ENCODE measurements at regions of chr1 and their contacts with region 1.

Region 1: GRCh38 chr1:152189657-152190442 is 30.8 kb upstream of the RPTN start:
- DNase-seq: peak; percentile 77
- H3K4me3 Mint-ChIP-seq: peak overlapping the region; percentile 71
- H3K27ac Mint-ChIP-seq: no peak overlapping the region
- H3K4me1 Mint-ChIP-seq: peaks cover 27% of the 10 kb centered on the region
- H3K27me3 Mint-ChIP-seq: peaks cover 61% of the 10 kb centered on the region
- CTCF ChIP-seq: peak; percentile 71

Region 2: GRCh38 chr1:151888972-151889570 is 300.8 kb before region 1 on chr1:
- CTCF ChIA-PET with region 1: no interaction called
- intact Hi-C with region 1: loop called (anchors 1 kb)
- DNase-seq: no peak
- H3K4me3 Mint-ChIP-seq: no peak overlapping the region
- H3K27ac Mint-ChIP-seq: no peak overlapping the region
- H3K4me1 Mint-ChIP-seq: no peaks in the 10 kb centered on the region
- H3K27me3 Mint-ChIP-seq: no peaks in the 10 kb centered on the region
- CTCF ChIP-seq: peak; percentile 58

Region 3: DNA sequence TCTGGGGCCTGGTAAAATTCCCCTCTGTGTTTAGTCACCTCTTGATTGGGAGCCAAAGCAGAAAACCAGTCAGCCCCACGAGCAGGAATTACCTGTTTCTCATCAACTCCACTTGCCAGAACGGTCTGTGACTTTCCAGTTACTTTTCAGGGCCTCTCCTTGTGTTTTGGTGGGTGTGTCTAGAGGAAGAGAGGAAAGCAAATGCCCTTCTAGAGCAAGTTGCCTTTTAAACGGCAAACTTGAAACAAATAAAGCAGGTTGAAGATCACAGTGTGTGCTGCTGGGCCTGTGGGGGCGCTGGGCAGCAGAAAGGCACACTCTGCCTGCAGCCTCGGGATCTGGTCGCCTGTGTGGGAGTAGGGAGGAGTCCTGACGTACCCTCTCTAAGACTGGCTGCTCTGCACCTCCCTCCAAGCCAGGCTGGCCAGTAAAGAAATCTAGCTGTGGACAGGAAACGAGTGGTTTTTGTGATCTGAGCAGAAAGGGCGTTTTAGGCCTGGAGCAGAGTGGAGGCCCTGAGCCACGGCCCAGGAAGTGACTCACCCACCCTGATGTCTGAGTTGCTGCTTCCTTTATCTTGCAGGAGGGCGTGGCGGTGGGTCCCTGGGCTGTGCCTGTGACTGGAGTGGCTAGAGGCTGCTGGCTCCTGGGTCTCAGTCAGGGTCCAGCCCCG is 142.0 kb before region 1 on chr1:
- CTCF ChIA-PET with region 1: interaction called, 6 read pairs
- intact Hi-C with region 1: loop called (anchors 1 kb)
- DNase-seq: peak; percentile 96
- H3K4me3 Mint-ChIP-seq: peak overlapping the region; percentile 48
- H3K27ac Mint-ChIP-seq: peak overlapping the region; percentile 84
- H3K4me1 Mint-ChIP-seq: peaks cover 41% of the 10 kb centered on the region
- H3K27me3 Mint-ChIP-seq: peaks cover 4% of the 10 kb centered on the region
- CTCF ChIP-seq: no peak

Region 4: DNA sequence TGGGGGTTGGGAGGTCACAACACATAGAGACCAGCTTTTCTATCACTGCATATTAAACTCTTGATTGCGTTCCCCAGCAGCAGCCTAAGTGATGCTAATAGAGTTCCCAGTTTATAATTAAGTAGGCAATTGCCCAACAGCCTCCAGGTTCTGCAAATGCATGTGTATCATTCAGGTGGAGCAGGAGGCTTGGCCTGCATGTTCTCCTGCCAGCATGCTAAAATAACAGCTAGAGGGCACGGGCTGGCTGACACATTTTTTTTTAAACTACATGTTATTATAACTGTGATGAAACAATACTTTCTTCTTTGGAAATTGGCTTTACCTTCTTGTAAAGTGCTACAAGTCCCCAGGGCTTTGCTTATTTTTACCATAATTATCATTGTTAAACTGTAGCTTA is 85.0 kb before region 1 on chr1:
- CTCF ChIA-PET with region 1: no interaction called
- intact Hi-C with region 1: no loop called
- DNase-seq: no peak
- H3K4me3 Mint-ChIP-seq: no peak overlapping the region
- H3K27ac Mint-ChIP-seq: no peak overlapping the region
- H3K4me1 Mint-ChIP-seq: peaks cover 13% of the 10 kb centered on the region
- H3K27me3 Mint-ChIP-seq: peaks cover 53% of the 10 kb centered on the region
- CTCF ChIP-seq: no peak

Region 5: GRCh38 chr1:152252157-152252556 is 62.3 kb after region 1 on chr1:
- CTCF ChIA-PET with region 1: no interaction called
- intact Hi-C with region 1: no loop called
- DNase-seq: no peak
- H3K4me3 Mint-ChIP-seq: no peak overlapping the region
- H3K27ac Mint-ChIP-seq: no peak overlapping the region
- H3K4me1 Mint-ChIP-seq: no peaks in the 10 kb centered on the region
- H3K27me3 Mint-ChIP-seq: peaks cover 57% of the 10 kb centered on the region
- CTCF ChIP-seq: no peak

Region 6: GRCh38 chr1:152347116-152347728 is 157.4 kb after region 1 on chr1:
- CTCF ChIA-PET with region 1: no interaction called
- intact Hi-C with region 1: loop called (anchors 2 kb)
- DNase-seq: peak; percentile 75
- H3K4me3 Mint-ChIP-seq: no peak overlapping the region
- H3K27ac Mint-ChIP-seq: no peak overlapping the region
- H3K4me1 Mint-ChIP-seq: no peaks in the 10 kb centered on the region
- H3K27me3 Mint-ChIP-seq: peaks cover 39% of the 10 kb centered on the region
- CTCF ChIP-seq: peak; percentile 83

Region 7: DNA sequence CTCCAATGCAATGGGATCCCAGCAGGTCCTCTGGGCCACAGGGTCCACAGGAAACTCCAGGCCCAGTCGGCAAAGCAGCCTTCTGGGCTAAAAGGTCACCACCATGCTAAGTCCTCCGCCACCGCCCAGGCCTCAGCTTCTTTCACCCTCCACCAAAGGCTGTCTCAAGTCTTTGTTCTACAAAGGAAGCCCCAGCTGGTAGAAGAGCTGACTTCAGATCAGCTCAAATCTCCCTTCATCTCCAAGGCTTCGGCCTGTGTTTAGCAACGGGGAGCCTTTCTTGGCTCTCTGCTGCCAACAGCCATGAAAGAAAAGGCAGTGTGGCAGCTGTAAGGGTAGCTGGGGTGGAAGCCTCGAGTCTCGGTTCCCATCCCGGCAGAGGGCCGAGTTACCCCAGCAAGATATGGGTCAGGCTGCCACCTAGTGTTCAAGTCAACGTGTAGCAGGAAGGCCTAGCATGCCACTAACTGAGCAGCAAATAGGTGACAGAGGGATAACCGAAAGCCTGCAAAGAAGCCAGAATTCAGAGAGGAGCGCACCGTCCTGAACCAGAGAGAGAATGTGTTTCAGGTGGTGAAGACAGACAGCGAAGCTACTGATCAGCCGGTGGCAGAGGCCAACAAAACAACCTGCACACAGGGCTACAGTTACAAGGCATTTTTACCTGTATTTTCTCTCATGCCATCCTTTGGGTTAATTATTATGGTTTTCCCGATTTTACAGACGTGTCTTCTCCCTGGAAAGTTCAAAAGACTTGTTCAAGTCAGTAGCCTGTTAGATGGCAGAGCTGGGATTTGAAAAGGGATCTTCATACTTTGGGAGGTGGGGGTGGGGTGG is 251.0 kb after region 1 on chr1:
- CTCF ChIA-PET with region 1: interaction called, 10 read pairs
- intact Hi-C with region 1: loop called (anchors 1 kb)
- DNase-seq: peak; percentile 84
- H3K4me3 Mint-ChIP-seq: no peak overlapping the region
- H3K27ac Mint-ChIP-seq: no peak overlapping the region
- H3K4me1 Mint-ChIP-seq: no peaks in the 10 kb centered on the region
- H3K27me3 Mint-ChIP-seq: peaks cover 91% of the 10 kb centered on the region
- CTCF ChIP-seq: peak; percentile 92

Region 8: GRCh38 chr1:153922972-153923925 is 1733.4 kb after region 1 on chr1 and contains the start of gene GATAD2B:
- CTCF ChIA-PET with region 1: no interaction called
- intact Hi-C with region 1: no loop called
- DNase-seq: peak; percentile 100
- H3K4me3 Mint-ChIP-seq: peak within 1 kb of the TSS; percentile 74
- H3K27ac Mint-ChIP-seq: peak within 1 kb of the TSS; percentile 91
- H3K4me1 Mint-ChIP-seq: peaks cover 25% of the 10 kb centered on the region
- H3K27me3 Mint-ChIP-seq: no peaks in the 10 kb centered on the region
- CTCF ChIP-seq: no peak
- total RNA-seq, gene GATAD2B: 58.3 and 62.5 TPM in 2 replicates

Measured in Calu3 (cell line).